Aorta (tissue), 5 donors: ENCODE measurements at regions of chr1 and their contacts with region 1.

Region 1: DNA sequence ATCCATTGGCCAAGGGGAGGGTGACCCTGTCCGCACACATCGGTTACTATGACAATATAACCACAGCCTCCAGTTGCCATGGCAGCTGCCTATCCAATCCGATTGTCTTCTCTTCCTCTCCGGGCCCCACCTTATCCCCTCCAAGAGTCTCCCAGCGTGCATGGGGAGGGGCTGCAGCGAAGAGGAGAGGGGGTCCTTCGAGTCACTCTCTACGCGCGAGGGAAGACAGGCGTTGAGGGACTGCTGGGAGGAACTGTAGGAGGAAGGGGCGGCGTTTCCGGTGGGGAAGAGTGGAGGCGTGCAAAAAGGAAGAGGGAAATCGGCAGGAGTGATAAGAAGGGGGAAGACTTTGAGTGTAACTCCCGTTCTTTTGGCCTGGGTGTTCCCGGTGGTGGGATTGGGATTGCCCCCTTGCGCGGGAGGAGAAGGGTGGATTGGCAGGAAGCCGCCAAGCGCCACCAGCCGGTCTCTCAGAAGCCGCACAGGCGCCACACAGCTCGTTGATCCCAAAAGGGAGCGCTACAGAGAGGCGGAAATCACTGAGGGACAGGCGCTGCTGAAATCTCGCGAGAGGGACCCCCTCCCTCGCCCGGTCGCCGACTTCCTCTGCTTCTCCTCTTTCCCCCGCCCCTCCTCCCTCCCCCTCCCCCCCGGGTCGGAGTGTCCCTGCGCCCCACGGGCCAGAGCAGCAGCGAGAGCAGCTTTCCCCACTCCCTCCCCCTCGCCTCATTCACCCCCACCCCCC is 384 bp upstream of the SMG7 start:
- DNase-seq: peak; percentile 98 to 99
- ATAC-seq: peak; percentile 94
- H3K4me3 ChIP-seq: peak overlapping the region; percentile 38 to 59
- H3K27ac ChIP-seq: peak overlapping the region; percentile 78 to 87
- H3K4me1 ChIP-seq: no peaks in the 10 kb centered on the region
- H3K27me3 ChIP-seq: no peaks in the 10 kb centered on the region

Region 2: DNA sequence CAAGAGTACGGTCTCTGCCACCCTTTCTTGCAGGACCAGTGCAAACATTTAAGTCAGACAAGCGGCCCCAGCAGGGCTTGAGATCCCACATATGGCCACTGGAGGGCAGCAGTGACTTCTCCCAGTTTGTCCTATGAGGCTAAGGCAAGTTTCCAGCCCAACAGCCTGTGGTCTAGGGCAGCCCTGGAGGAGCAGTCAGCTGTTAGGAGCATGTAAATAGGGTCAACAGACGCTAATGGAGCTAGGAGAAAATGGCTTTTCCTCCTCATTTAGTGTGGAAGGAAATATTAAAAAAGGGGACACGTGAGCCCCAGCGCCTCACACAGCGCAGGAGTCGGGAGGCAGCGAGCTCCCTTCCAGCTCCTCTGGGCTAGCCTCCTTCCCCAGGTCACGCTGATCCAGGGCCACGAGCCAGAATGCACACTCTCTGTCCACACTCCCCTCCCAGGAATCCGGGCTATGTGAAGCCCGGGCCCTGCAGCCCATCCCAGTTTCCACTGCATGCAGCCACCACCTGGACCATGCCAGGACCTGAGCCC is 190.3 kb before region 1 on chr1:
- intact Hi-C with region 1: loop called in 1 of 2 experiments (anchors 2 kb)
- DNase-seq: peak; percentile 92 to 95
- ATAC-seq: peak; percentile 95
- H3K4me3 ChIP-seq: no peak overlapping the region
- H3K27ac ChIP-seq: peak overlapping the region in 1 of 2 donors; percentile 11
- H3K4me1 ChIP-seq: peaks cover 0 to 2% of the 10 kb centered on the region in 2 donors
- H3K27me3 ChIP-seq: no peaks in the 10 kb centered on the region

Region 3: DNA sequence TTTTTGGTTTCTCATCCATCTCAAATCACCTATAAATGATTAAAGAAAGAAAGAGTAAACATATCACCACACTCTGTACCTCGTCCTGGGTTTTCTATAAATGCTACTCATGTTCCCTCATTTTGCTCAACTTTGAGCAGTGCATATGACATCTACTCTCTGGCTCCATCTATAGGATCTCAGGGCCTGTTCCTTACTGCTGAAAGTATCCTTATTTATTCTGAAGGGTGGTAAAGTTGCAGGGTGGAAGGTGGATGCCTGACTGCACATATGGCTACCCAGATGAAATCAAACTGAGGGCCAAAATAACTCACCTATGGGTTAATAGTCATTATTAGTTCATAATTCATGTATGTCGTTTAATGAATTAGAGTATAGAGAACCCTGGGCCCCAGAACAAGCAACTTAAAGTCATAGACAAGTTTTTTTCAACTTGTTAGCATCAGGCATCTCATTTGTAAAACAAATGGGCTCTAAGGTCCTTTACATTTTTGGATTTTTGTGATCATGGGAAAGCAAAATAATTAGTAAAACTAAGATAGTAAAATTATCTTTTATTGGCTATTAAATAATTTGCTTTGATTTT is 71.8 kb after region 1 on chr1:
- intact Hi-C with region 1: loop called in 1 of 2 experiments (anchors 5 kb)
- DNase-seq: no peak
- ATAC-seq: no peak
- H3K4me3 ChIP-seq: no peak overlapping the region
- H3K27ac ChIP-seq: no peak overlapping the region
- H3K4me1 ChIP-seq: no peaks in the 10 kb centered on the region
- H3K27me3 ChIP-seq: no peaks in the 10 kb centered on the region

Region 4: GRCh38 chr1:183622884-183623785 is 151.2 kb after region 1 on chr1:
- intact Hi-C with region 1: loop called in 1 of 2 experiments (anchors 2 kb)
- DNase-seq: no peak
- ATAC-seq: peak; percentile 93
- H3K4me3 ChIP-seq: no peak overlapping the region
- H3K27ac ChIP-seq: peak overlapping the region in 1 of 2 donors; percentile 36
- H3K4me1 ChIP-seq: peaks cover 0 to 3% of the 10 kb centered on the region in 2 donors
- H3K27me3 ChIP-seq: no peaks in the 10 kb centered on the region

Region 5: GRCh38 chr1:183635606-183636333 is 163.9 kb after region 1 on chr1 and contains the start of gene ARPC5:
- intact Hi-C with region 1: loop called (anchors 1 to 5 kb)
- DNase-seq: peak; percentile 98 to 99
- ATAC-seq: peak; percentile 98
- H3K4me3 ChIP-seq: peak within 1 kb of the TSS; percentile 60 to 97
- H3K27ac ChIP-seq: peak within 1 kb of the TSS; percentile 85 to 99
- H3K4me1 ChIP-seq: no peaks in the 10 kb centered on the region
- H3K27me3 ChIP-seq: no peaks in the 10 kb centered on the region
- total RNA-seq, gene ARPC5: 115 to 131 TPM